WTC11 (cell line): ENCODE measurements at regions of chr10 and their contacts with region 1.

Region 1: DNA sequence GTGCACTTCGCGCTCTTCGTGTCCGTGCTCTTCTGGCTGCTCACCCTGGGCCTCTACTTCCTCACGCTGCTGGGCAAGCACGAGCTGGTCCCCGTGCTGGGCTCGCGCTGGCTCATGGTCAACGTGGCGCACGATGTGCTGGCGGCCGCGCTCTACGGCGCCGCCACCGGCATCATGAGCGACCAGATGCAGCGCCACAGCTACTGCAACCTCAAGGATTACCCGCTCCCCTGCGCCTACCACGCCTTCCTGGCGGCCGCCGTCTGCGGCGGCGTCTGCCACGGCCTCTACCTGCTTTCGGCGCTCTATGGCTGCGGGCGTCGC is 480 bp downstream of the MARVELD1 start:
- DNase-seq: peak; percentile 67
- ATAC-seq: peak; percentile 14
- H3K4me3 Mint-ChIP-seq: peak overlapping the region; percentile 98
- H3K27ac Mint-ChIP-seq: peak overlapping the region; percentile 97
- H3K4me1 Mint-ChIP-seq: peaks cover 52% of the 10 kb centered on the region
- H3K27me3 Mint-ChIP-seq: peaks cover 3% of the 10 kb centered on the region; the same call in 1 of the 2 replicates
- CTCF ChIP-seq: no peak

Region 2: DNA sequence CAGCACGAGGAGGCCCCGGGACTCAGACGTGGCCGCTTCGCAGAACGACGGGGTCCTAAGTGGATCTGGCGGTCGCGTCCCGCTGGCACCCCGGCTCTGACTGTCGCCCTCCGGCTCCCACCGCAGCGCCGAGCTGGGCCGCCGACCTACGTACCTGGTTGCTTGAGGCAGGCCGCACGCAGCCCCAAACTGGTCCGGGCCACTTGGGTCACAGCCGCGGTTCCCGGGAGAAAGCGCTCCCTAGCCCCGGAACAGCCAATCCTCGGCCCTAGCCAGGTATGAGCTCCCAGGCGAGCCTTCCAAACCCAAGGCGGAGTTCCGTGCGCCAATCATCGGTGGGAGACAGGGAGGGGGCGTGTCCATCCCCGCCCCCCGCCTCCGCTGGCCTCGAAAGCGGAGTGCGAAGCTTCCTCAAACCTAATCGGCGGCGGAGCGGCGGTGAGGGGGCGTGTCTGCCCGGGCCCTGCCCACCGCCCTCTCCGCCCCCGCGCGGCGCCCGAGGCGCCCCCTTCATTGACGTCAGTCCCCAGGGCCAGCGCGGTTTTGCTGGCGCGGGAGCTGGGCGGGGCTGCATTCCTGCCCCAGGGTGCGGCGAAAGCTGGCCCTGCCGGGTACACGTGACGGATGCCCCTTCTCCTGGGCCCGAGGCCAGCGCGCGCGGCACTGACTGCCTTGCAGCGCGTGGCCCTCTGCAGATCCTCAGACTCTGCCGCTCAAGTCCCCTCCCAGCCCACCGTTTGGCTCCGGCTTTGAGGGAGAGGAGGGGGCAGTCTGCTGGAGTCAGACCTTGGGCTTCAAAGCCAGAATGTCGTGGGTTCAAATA is 26.8 kb before region 1 on chr10 and contains the start of gene AVPI1:
- CTCF ChIA-PET with region 1: interaction called, 31 read pairs
- POLR2A ChIA-PET with region 1: interaction called, 27 read pairs
- DNase-seq: peak; percentile 98
- ATAC-seq: peak; percentile 91
- H3K4me3 Mint-ChIP-seq: peak within 1 kb of the TSS; percentile 86
- H3K27ac Mint-ChIP-seq: peak within 1 kb of the TSS; percentile 92
- H3K4me1 Mint-ChIP-seq: peaks cover 32% of the 10 kb centered on the region
- H3K27me3 Mint-ChIP-seq: peaks cover 17% of the 10 kb centered on the region
- CTCF ChIP-seq: no peak
- total RNA-seq, gene AVPI1: 8.1 to 9.8 TPM (median 9.0 TPM) in 3 replicates

Region 3: GRCh38 chr10:97724341-97724941 is 10.4 kb after region 1 on chr10:
- CTCF ChIA-PET with region 1: interaction called, 68 read pairs
- POLR2A ChIA-PET with region 1: interaction called, 10 read pairs
- DNase-seq: no peak
- ATAC-seq: no peak
- H3K4me3 Mint-ChIP-seq: no peak overlapping the region
- H3K27ac Mint-ChIP-seq: no peak overlapping the region
- H3K4me1 Mint-ChIP-seq: peaks cover 15% of the 10 kb centered on the region
- H3K27me3 Mint-ChIP-seq: no peaks in the 10 kb centered on the region; the same call in 1 of the 2 replicates
- CTCF ChIP-seq: no peak

Region 4: DNA sequence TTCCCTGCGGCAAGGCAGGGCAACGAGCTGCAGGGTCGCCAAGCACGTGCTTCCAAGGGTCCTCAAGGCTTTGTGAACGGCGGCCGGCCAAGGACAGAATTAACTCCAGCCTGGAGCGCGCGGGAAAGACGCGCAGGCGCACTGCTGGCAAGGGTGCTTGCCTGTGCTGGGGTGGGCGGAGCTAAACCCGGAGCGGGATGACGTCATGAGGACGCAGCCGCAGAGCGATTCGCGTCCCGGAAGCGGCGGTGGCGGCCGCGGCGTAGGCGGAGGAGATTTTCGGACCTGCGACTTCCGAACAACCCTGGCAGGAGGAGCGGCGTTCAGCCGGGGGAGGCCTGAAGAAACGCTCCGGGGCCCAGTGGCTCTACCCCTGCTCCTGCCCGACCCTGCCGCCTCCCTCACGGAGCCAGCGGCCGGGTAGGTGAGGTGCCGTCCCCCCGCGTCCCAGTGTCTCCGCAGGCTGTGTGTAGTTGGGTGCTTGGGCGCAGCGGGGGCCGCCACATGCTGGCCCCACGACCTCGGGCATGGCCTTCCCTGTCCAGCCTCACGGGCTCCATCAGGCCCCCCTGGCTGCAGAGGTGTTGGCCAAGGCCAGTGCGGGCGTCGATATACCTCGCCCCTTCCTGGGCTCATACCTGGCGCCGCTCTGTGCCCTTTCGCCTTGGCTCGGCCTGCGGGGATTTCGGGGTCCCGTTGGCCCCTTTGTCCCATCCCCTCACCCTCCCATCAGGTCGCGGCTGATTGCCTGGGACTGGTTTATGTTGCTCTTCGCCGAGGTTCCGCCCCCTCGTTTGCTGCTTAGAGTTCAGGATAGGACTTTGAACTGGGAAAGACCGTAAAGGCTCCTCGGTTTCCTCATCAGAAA is 23.1 kb after region 1 on chr10 and contains the start of gene ZFYVE27:
- CTCF ChIA-PET with region 1: interaction called, 36 read pairs
- POLR2A ChIA-PET with region 1: interaction called, 4 read pairs
- DNase-seq: peak; percentile 98
- ATAC-seq: peak; percentile 92
- H3K4me3 Mint-ChIP-seq: peak within 1 kb of the TSS; percentile 87
- H3K27ac Mint-ChIP-seq: peak within 1 kb of the TSS; percentile 90
- H3K4me1 Mint-ChIP-seq: peaks cover 10% of the 10 kb centered on the region
- H3K27me3 Mint-ChIP-seq: peaks cover 34% of the 10 kb centered on the region
- CTCF ChIP-seq: no peak
- total RNA-seq, gene ZFYVE27: 23.2 to 26.9 TPM (median 26.0 TPM) in 3 replicates

Region 5: DNA sequence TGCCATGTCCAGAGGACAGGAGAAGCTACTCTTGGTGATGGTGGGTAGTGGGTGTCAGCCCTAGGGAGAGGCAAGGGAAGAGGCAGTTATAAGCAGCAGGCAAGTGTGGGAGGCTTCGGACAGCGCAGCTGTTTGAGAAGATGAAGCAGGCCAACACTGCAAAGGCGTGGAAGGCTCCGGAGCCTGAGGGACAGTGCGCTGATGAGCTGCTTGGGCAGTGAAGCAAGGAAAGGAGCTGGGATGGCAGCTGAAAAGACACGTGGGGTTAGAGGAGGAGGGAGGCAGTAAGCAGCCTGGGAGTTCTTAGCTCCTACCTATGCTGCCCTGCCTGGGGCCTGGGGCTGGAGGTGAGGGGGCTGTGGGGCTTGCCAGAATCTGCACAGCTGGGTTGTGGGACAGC is 366.5 kb after region 1 on chr10:
- CTCF ChIA-PET with region 1: no interaction called
- POLR2A ChIA-PET with region 1: no interaction called
- DNase-seq: no peak
- ATAC-seq: no peak
- H3K4me3 Mint-ChIP-seq: no peak overlapping the region
- H3K27ac Mint-ChIP-seq: no peak overlapping the region
- H3K4me1 Mint-ChIP-seq: no peaks in the 10 kb centered on the region
- H3K27me3 Mint-ChIP-seq: peaks cover 4% of the 10 kb centered on the region
- CTCF ChIP-seq: no peak

Region 6: GRCh38 chr10:98331885-98332284 is 617.9 kb after region 1 on chr10:
- CTCF ChIA-PET with region 1: no interaction called
- POLR2A ChIA-PET with region 1: no interaction called
- DNase-seq: peak; percentile 62
- ATAC-seq: peak; percentile 98
- H3K4me3 Mint-ChIP-seq: no peak overlapping the region
- H3K27ac Mint-ChIP-seq: no peak overlapping the region
- H3K4me1 Mint-ChIP-seq: peaks cover 9% of the 10 kb centered on the region
- H3K27me3 Mint-ChIP-seq: no peaks in the 10 kb centered on the region
- CTCF ChIP-seq: peak; percentile 38; the same call in 1 of the 2 replicates